ENCODE measurements at regions of chr4 and their contacts with region 1.

Region 1: DNA sequence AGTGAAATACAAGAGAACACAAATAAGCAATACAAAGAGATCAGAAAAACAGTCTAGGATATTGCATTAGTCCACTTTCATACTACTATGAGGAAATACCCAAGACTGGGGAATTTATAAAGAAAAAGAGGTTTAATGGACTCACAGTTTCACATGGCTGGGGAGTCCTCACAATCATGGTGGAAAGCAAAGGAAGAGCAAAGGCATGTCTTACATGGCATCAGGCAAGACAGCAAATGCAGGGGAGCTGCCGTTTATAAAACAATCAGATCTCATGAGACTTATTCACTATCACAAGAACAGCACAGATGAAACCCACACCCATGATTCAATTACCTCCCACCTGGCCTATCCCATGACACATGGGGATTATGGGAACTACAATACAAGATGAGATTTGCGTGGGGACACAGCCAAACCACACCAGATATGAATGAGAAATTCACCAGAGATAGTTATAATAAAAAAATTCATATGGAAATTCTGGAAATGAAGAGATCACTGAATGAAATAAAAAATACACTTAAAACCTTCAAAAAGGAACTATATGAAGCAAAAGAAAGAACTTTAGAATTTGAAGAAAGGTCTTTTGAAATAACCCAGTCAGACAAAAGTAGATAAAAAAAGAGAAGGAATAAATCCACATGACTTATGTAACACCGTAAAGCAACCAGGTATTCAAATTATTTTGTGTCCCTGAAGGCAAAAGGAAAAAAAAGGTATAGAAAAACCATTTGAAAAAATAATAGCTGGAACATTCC is 16.2 kb upstream of the NAA11 start:
- DNase-seq: no peak

Region 2: DNA sequence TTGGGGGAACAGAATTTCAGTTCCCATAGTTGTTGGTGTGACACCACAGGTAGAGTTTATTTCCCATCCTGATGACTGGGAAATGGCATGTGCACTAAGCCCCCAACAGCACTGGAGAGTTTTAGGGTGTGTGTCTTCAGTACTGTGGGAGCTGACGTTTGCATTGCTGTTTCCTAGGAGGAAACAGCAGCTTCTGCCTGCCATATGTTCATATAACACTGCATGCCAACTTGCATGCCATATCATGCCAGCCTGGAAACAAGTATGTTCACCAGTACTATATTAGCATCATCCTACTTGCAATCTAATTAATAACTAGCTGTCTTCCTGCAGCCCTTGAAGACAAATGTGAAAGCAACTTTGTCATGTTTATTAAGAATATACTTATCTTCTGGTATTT is 74.4 kb before region 1 on chr4:
- intact Hi-C with region 1: loop called in 1 of 2 experiments (anchors 1 kb)
- DNase-seq: no peak